ENCODE measurements at regions of chr15 and their contacts with region 1.

Region 1: GRCh38 chr15:76057332-76058000 is 2.3 kb upstream of the TMEM266 start:
- DNase-seq: no peak
- H3K4me3 Mint-ChIP-seq: no peak overlapping the region
- H3K27ac Mint-ChIP-seq: no peak overlapping the region
- H3K4me1 Mint-ChIP-seq: peaks cover 22% of the 10 kb centered on the region
- H3K27me3 Mint-ChIP-seq: peaks cover 56% of the 10 kb centered on the region

Region 2: DNA sequence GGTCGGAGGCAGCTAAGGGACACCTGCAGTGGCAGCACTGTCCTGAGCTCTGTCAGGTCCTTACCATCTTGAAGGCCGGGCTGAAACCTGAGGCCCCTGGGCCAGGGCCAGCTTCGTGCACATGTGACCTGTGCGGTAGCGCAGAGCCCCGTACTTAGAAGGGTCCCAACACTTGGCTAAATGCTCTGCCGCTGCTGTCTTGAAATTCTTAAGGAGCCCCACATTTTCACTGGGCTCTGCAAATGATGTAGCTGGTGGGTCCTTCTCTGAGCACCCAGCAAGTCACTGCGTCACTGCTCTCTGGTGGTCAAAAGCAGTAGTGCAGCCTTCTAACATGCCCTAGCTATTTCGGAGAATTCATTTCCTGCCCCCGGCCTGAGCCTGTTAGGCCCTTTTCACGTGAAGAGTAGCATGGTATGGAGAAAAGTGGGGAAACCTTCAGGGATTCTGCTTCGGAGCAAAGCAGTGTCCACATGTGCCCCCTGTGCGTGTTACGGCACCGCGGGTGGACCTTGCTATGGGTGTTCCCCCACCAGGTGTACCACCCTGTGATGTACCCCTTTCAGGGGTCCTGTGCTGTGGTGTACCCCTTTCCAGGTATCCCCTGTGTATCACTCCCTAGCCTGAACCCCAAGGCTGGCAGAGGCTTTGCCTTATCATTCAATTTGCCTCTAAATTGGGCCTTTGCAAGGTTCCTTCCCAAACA is 82.1 kb after region 1 on chr15:
- intact Hi-C with region 1: loop called (anchors 1 kb)
- DNase-seq: peak; percentile 66
- H3K4me3 Mint-ChIP-seq: no peak overlapping the region
- H3K27ac Mint-ChIP-seq: no peak overlapping the region
- H3K4me1 Mint-ChIP-seq: peaks cover 3% of the 10 kb centered on the region
- H3K27me3 Mint-ChIP-seq: peaks cover 26% of the 10 kb centered on the region

Region 3: GRCh38 chr15:76150971-76151598 is 93.6 kb after region 1 on chr15:
- intact Hi-C with region 1: loop called (anchors 2 kb)
- DNase-seq: peak; percentile 63
- H3K4me3 Mint-ChIP-seq: no peak overlapping the region
- H3K27ac Mint-ChIP-seq: peak overlapping the region; percentile 9
- H3K4me1 Mint-ChIP-seq: peaks cover 13% of the 10 kb centered on the region
- H3K27me3 Mint-ChIP-seq: peaks cover 9% of the 10 kb centered on the region

Region 4: DNA sequence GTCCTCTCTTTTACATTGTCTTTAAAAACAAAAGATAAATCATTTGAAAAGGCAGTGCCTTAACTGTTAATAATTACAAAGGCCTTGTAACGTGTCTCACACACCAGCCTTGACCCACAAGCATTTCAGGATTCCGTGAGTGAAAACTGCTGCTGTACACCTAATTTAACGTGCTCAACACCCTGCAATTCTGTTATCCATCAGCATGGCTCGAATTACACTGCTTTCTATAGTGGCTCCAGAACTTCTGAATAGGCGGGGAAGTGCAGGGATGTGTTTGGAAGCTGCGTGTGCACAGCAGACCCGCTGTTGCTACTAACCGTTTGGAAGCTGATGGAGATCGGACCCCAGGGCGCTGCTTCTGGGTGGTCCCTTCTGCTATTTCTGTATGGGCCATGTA is 263.7 kb after region 1 on chr15:
- intact Hi-C with region 1: no loop called
- DNase-seq: no peak
- H3K4me3 Mint-ChIP-seq: no peak overlapping the region
- H3K27ac Mint-ChIP-seq: no peak overlapping the region
- H3K4me1 Mint-ChIP-seq: peaks cover 1% of the 10 kb centered on the region
- H3K27me3 Mint-ChIP-seq: peaks cover 22% of the 10 kb centered on the region

Region 5: DNA sequence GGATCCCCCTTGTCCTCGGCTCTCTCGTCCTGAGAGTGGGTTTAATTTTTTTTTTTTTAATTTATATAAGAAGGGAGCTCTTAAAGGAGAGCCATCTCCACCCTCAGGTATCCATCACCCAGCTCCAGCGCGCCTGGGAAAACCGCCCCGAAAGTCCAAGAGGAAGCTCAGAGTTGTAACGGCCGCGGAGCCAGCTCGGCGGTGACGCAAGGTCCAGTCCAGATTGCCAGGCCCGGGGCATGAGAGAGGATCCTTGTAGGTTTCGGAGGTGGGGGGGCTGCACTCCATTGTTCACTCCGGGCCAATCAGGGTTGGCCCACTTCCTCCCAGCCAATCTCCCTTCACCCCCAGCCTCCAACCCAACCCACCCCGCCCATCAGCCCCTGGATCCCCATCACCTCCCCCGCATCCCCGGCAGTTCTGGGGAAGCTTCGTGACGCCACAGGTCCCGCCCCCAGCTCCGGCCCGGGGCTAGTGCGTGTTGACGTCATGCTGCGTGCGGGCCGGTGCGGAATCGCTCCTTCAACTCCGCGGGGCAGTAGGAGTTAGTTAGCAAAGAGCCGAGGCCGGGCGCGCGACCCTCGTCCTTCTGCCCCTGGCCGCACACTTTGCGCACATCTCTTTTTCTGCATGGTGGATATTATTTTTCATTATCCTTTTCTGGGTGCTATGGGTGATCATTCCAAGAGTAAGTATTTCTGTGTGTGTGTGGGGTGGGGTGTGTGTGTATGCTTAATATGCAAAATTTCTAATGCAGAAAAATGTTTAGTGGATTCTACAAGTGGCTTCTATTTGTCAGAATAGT is 279.0 kb after region 1 on chr15 and contains the start of gene ISL2:
- intact Hi-C with region 1: loop called (anchors 5 kb)
- DNase-seq: peak; percentile 74
- H3K4me3 Mint-ChIP-seq: peak within 1 kb of the TSS; percentile 85
- H3K27ac Mint-ChIP-seq: peak within 1 kb of the TSS; percentile 67
- H3K4me1 Mint-ChIP-seq: peaks cover 35% of the 10 kb centered on the region
- H3K27me3 Mint-ChIP-seq: peaks cover 52% of the 10 kb centered on the region
- total RNA-seq, gene ISL2: 1.4 and 1.8 TPM in 2 replicates

Measured in activated T-helper 2 cell treated with anti-CD3 and anti-CD28 coated beads, Interferon-gamma antibody, Interleukin-2, Interleukin-4, amounts not matched to agents 10 μg/mL and 5 μg/mL and 100 μg/mL, durations not matched to agents 14 hours and 24 hours and 36 hours (primary cell).